Activated T-helper 2 cell treated with anti-CD3 and anti-CD28 coated beads, Interferon-gamma antibody, Interleukin-2, Interleukin-4, amounts not matched to agents 10 μg/mL and 5 μg/mL and 100 μg/mL, durations not matched to agents 14 hours and 24 hours and 36 hours (primary cell): ENCODE measurements at regions of chr18 and their contacts with region 1.

Region 1: GRCh38 chr18:47772374-47773248 is 157.8 kb downstream of the SMAD2 start:
- DNase-seq: peak; percentile 37
- H3K4me3 Mint-ChIP-seq: no peak overlapping the region
- H3K27ac Mint-ChIP-seq: no peak overlapping the region
- H3K4me1 Mint-ChIP-seq: peaks cover 8% of the 10 kb centered on the region
- H3K27me3 Mint-ChIP-seq: peaks cover 4% of the 10 kb centered on the region

Region 2: DNA sequence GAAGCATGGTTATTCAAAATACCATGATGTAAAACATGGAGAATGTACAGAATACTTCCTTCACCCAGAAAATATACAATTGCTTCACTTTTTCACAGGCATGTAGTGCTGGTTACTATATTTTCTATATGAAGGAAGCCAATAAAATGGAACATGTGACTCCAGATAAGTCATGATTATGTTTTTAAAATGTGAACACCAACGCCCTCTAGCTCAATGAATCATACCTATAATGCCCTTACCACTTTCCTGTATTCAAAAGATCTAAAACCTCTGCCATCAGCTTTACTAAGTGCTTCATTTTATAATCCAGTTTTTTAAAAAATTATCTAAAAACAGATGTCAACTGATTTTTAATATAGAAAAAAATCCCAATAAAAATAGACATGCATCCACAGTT is 98.0 kb after region 1 on chr18:
- intact Hi-C with region 1: loop called (anchors 5 kb)
- DNase-seq: no peak
- H3K4me3 Mint-ChIP-seq: no peak overlapping the region
- H3K27ac Mint-ChIP-seq: peak overlapping the region; percentile 68
- H3K4me1 Mint-ChIP-seq: peaks cover 51% of the 10 kb centered on the region
- H3K27me3 Mint-ChIP-seq: no peaks in the 10 kb centered on the region

Region 3: DNA sequence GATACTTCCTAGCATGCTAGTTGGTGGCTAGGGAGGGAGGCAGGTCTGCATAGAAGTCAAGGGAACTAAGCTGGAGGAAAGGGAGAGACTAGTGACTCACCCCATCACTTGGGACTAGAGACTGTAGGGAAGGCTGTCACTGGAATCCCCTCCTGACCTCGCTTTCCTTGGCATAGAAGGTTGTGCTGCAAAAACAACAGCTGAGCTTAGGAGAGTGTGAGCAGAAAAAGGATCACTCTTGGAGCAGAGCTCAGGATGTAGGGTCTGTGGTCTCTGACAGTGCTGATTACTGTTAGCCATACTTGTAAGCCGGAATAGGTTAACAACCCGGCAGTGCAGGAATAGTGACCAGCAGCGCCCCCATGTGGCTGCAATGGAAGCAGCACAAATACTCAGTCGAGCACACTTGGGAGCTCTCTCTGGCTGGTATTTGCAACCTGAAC is 224.7 kb after region 1 on chr18:
- intact Hi-C with region 1: loop called (anchors 1 kb)
- DNase-seq: no peak
- H3K4me3 Mint-ChIP-seq: no peak overlapping the region
- H3K27ac Mint-ChIP-seq: no peak overlapping the region
- H3K4me1 Mint-ChIP-seq: peaks cover 4% of the 10 kb centered on the region
- H3K27me3 Mint-ChIP-seq: no peaks in the 10 kb centered on the region

Region 4: DNA sequence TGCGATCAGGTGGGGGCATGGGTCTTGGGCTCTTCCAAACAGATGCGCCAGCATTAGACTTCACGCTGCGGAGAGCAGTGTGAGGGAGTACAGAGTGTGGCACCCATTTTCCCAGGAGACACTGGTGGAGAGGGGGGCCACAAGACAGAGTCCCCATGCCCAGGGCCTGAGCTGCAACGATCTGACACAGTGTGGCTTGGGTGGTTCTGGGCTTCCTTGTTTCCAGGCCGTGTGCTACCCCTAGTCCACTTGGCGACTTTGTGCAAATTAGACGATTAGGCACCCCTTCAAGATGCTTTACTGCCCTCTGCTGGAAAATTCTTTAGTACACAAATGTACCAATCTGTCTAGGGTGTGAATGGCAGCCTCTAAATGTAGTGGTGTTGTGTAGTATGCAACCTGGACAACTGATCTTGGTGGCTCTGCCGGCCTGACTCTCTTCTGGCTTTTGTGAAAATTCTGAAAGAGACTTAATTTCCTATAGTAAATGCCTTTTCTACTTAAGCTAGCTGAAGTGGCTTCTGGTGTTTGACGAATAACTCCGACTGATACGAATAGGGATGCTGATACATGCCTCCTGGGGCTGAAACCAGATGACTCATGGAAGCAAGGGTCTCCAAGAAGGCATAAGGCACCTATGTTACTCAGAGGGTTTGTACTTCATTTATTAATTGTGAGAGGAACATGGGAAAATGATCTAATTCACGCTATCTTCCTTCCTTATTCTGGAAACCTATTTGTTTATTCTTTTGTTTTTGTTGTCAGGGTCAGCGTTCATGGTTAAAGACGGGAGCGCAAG is 250.1 kb after region 1 on chr18:
- intact Hi-C with region 1: loop called (anchors 1 kb)
- DNase-seq: no peak
- H3K4me3 Mint-ChIP-seq: no peak overlapping the region
- H3K27ac Mint-ChIP-seq: no peak overlapping the region
- H3K4me1 Mint-ChIP-seq: peaks cover 5% of the 10 kb centered on the region
- H3K27me3 Mint-ChIP-seq: peaks cover 28% of the 10 kb centered on the region